ENCODE measurements at regions of chr2 and their contacts with region 1.

Region 1: DNA sequence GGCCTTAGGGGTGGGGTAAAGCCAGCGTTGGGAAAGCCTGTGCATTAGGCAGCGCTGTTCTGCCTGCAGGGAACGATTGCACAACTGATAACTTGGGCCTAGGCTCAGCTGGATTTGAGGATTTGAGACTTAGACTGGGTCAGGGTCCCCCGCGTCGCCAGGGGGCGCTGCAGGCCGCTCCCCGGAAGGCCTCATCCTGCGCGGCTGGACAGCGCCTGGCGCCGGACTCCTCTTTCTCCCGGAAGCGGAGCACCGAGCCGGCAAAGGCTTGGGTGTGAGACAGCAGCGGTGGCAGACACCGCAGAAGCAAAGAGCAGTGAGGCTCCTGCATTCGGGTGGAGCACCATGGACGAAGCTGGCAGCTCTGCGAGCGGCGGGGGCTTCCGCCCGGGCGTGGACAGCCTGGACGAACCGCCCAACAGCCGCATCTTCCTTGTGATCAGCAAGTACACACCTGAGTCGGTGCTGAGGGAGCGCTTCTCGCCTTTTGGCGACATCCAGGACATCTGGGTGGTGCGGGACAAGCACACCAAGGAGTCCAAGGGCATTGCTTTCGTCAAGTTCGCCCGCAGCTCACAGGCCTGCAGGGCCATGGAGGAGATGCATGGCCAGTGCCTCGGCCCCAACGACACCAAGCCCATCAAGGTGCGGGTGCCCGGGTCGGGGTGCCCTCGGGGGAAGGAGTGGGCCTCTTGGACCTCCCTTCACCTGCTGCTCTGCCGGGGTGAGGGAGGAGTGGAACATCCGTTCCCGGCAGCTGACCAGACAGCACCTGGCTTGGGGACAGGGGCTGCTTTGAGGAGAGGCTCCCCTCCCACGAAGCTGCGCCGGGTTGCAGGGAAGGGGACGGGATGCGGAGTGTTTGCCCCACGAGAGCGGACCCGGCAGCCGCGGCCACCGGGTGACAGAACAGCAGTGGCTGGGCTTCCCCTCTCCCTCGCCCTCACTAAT is at the start of gene RBM45:
- DNase-seq: peak; percentile 92
- CTCF ChIP-seq: peak; percentile 97

Region 2: GRCh38 chr2:177212106-177212890 is 900.2 kb before region 1 on chr2 and contains the start of gene HNRNPA3:
- in situ Hi-C with region 1: no loop called
- DNase-seq: peak; percentile 99
- CTCF ChIP-seq: peak; percentile 9

Region 3: DNA sequence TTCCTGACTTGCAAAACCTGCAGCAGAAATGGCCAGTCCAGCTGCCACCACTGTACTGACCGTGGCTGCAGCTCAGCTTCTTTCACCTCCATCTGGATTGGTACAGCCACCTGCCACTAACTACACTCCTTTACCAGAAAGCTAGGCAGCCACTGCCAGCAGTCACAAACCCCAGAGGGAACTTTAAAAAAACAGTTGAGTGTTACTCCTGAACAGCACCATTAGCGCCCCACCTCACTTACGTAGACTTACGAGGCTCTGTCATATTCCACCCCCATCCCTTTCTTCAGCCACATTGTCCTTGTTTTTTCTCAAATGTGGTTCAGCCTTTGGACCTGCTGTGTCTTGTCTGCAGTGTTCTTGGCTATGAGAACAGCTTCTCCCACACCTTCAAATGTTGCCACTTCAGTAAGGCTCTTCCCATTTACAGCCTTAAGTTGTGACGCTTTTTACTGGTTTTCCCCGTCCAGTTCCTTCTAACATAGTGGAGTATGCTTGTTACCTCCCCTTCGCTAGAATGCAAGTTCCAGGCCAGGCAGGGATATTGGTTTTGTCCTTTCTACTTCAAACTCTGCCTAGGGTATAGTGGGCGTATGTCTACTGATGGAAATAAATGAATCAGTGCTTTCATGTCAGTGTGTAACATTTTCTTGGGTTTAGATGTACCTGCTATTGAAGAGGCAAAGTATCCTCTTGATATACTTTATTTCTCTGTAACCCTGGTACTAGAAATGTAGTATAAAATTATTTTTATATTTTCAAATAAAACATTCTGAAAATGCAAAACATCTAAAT is 882.8 kb before region 1 on chr2:
- in situ Hi-C with region 1: no loop called
- DNase-seq: no peak
- CTCF ChIP-seq: no peak

Region 4: GRCh38 chr2:177662895-177663294 is 449.6 kb before region 1 on chr2:
- in situ Hi-C with region 1: no loop called
- DNase-seq: no peak
- CTCF ChIP-seq: no peak

Region 5: GRCh38 chr2:178279142-178279541 is 166.7 kb after region 1 on chr2:
- in situ Hi-C with region 1: loop called (anchors 10 kb)
- DNase-seq: no peak
- CTCF ChIP-seq: no peak

Region 6: GRCh38 chr2:178306352-178307073 is 194.0 kb after region 1 on chr2:
- in situ Hi-C with region 1: no loop called
- DNase-seq: peak; percentile 48
- CTCF ChIP-seq: peak; percentile 71

Region 7: GRCh38 chr2:178414266-178415247 is 302.1 kb after region 1 on chr2:
- in situ Hi-C with region 1: loop called (anchors 25 kb)
- DNase-seq: peak; percentile 72
- CTCF ChIP-seq: peak; percentile 87